Motor neuron (in vitro differentiated cells): ENCODE measurements at regions of chr16 and their contacts with region 1.

Region 1: DNA sequence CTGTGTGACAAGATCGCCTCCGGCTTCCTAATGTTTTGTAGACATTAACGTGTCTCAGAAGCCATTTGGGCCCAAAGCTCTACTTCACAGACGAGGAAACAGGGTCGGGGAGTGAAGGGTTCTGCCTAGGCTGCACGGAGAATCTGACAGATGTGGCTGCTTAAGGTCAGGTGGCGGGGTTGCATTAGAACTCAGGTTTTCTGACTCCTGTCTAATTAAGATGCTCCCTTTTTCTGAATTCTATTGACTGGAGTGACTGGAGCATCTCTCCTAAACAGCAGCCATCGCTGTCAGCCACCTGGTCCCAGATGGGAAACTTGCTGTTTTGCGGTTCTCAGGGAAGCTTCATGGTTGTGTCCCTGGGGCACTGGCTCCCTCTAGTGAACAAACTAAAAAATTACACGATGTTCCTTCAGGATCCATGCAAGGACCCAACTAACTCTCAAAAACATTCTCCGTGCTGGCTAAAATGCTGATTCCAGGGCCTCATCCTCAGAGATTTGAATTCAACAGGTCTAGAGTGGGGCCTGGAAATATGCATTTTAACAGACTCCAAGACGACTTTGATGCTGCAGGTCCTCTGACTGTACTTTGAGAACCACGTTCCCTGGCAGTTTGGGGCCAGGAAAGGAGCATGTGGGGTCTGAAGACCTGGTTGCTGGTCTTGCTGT is 117.4 kb downstream of the IRF8 start:
- ATAC-seq: peak in 7 of 8 experiments; percentile 14 to 80 (median 55)
- H3K4me3 ChIP-seq: no peak overlapping the region
- H3K27ac ChIP-seq: no peak overlapping the region
- H3K4me1 ChIP-seq: peaks cover 14 to 15% of the 10 kb centered on the region in 2 donors

Region 2: GRCh38 chr16:85799497-85800337 is 216.6 kb before region 1 on chr16 and contains the starts of genes COX4I1 and EMC8:
- in situ Hi-C with region 1: loop called in 1 of 9 experiments (anchors 25 kb)
- ATAC-seq: peak; percentile 83 to 94 (median 89)
- H3K4me3 ChIP-seq: peak within 1 kb of the TSS; percentile 53 to 97 (median 67)
- H3K27ac ChIP-seq: peak within 1 kb of the TSS; percentile 83 to 89
- H3K4me1 ChIP-seq: peaks cover 13 to 17% of the 10 kb centered on the region in 2 donors
- total RNA-seq, gene COX4I1: 531 to 741 (median 580) TPM
- total RNA-seq, gene EMC8: 13.5 to 32.5 (median 25.6) TPM

Region 3: DNA sequence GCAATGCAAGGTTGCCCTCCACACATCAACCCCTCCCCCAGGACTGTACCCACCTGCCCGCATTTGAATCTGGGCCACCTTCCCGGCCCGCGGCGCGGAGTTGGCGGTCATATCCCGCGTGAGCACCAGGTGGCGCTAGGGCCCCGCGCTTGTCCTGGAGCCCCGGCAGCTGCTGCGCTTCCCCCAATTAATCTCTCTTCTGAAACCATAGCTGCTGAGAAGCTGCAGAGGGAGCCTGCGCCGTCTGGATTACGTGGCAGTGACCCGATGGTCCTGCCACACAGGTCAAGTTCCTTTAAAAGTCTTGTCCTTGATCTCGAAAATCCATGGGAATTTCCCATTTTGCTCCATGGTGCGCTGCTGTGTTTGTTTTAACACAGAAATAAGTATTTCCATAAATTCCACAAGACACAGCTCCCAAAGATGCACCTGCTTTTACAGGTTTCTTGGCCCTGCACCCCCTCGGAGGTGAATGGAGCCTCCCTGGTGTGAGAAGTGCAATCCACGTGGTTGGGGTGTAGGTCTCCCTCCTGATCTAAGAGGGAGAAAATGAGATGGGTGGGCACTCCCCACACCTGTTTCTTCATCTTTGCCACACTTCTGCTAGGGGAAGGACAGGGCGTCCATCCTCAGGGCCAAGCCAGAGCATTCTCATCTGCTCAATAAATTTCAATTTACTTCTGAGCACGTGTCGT is 194.7 kb before region 1 on chr16:
- in situ Hi-C with region 1: loop called in 4 of 9 experiments (anchors 10 to 25 kb)
- ATAC-seq: peak; percentile 73 to 99 (median 96)
- H3K4me3 ChIP-seq: no peak overlapping the region
- H3K27ac ChIP-seq: no peak overlapping the region
- H3K4me1 ChIP-seq: peaks cover 2 to 5% of the 10 kb centered on the region in 2 donors

Region 4: GRCh38 chr16:85829751-85830445 is 186.4 kb before region 1 on chr16:
- in situ Hi-C with region 1: loop called in 3 of 9 experiments (anchors 10 to 25 kb)
- ATAC-seq: no peak
- H3K4me3 ChIP-seq: no peak overlapping the region
- H3K27ac ChIP-seq: no peak overlapping the region
- H3K4me1 ChIP-seq: no peaks in the 10 kb centered on the region